Panc1 (cell line): ENCODE measurements at regions of chr15 and their contacts with region 1.

Region 1: GRCh38 chr15:85672332-85673084 is 122.2 kb downstream of the KLHL25 start:
- DNase-seq: no peak
- ATAC-seq: no peak
- H3K4me3 ChIP-seq: no peak overlapping the region
- H3K27ac ChIP-seq: no peak overlapping the region
- H3K4me1 ChIP-seq: no peaks in the 10 kb centered on the region
- H3K27me3 ChIP-seq: no peaks in the 10 kb centered on the region
- CTCF ChIP-seq: no peak

Region 2: GRCh38 chr15:85972805-85973540 is 300.5 kb after region 1 on chr15:
- CTCF ChIA-PET with region 1: no interaction called
- POLR2A ChIA-PET with region 1: interaction called, 14 read pairs
- in situ Hi-C with region 1: no loop called
- intact Hi-C with region 1: no loop called
- DNase-seq: no peak
- ATAC-seq: no peak
- H3K4me3 ChIP-seq: no peak overlapping the region
- H3K27ac ChIP-seq: no peak overlapping the region
- H3K4me1 ChIP-seq: no peaks in the 10 kb centered on the region
- H3K27me3 ChIP-seq: peaks cover 2% of the 10 kb centered on the region; the same call in 1 of the 2 replicates
- CTCF ChIP-seq: no peak

Region 3: DNA sequence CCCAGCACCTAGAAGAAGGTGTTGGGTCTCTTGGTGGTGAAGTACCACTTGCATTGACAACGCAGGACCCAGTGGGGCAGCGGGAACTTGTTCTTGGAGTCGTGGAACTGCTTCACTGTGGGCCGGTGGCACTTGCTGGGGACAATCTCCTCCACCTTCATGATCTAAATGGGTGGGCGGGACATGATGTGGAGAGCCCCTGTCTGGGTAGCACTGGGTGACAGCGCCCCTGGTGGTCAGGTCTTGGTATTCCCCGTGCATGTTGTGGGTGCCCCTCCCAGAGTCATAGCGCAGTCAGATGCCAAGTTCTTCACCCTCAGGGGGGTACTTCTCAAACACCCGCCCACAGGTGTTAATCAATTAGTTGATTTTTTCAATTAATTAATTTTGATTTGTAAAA is 467.3 kb after region 1 on chr15:
- CTCF ChIA-PET with region 1: no interaction called
- POLR2A ChIA-PET with region 1: no interaction called
- in situ Hi-C with region 1: no loop called
- intact Hi-C with region 1: no loop called
- DNase-seq: peak; percentile 2
- ATAC-seq: no peak
- H3K4me3 ChIP-seq: no peak overlapping the region
- H3K27ac ChIP-seq: no peak overlapping the region
- H3K4me1 ChIP-seq: no peaks in the 10 kb centered on the region
- H3K27me3 ChIP-seq: no peaks in the 10 kb centered on the region
- CTCF ChIP-seq: peak; percentile 23; the same call in 1 of the 2 replicates